Activated CD4-positive, alpha-beta memory T cell treated with anti-CD3 and anti-CD28 coated beads for 36 hours (primary cell): ENCODE measurements at regions of chr10 and their contacts with region 1.

Region 1: GRCh38 chr10:46030091-46030937 is at the start of gene NCOA4:
- DNase-seq: peak; percentile 98
- H3K4me3 Mint-ChIP-seq: peak within 1 kb of the TSS; percentile 84
- H3K27ac Mint-ChIP-seq: peak within 1 kb of the TSS; percentile 86
- H3K4me1 Mint-ChIP-seq: peaks cover 48% of the 10 kb centered on the region
- H3K27me3 Mint-ChIP-seq: no peaks in the 10 kb centered on the region
- total RNA-seq, gene NCOA4: 79.9 to 85.3 TPM

Region 2: GRCh38 chr10:45249978-45250693 is 780.2 kb before region 1 on chr10:
- CTCF ChIA-PET with region 1: no interaction called
- POLR2A ChIA-PET with region 1: no interaction called
- intact Hi-C with region 1: loop called (anchors 5 kb)
- DNase-seq: no peak
- H3K4me3 Mint-ChIP-seq: peak overlapping the region; percentile 35
- H3K27ac Mint-ChIP-seq: no peak overlapping the region
- H3K4me1 Mint-ChIP-seq: peaks cover 11% of the 10 kb centered on the region
- H3K27me3 Mint-ChIP-seq: peaks cover 2% of the 10 kb centered on the region

Region 3: GRCh38 chr10:45672181-45673073 is 357.9 kb before region 1 on chr10 and contains the start of gene ZFAND4:
- CTCF ChIA-PET with region 1: no interaction called
- POLR2A ChIA-PET with region 1: no interaction called
- intact Hi-C with region 1: loop called (anchors 5 kb)
- DNase-seq: peak; percentile 96
- H3K4me3 Mint-ChIP-seq: peak within 1 kb of the TSS; percentile 88
- H3K27ac Mint-ChIP-seq: peak within 1 kb of the TSS; percentile 62
- H3K4me1 Mint-ChIP-seq: peaks cover 35% of the 10 kb centered on the region
- H3K27me3 Mint-ChIP-seq: no peaks in the 10 kb centered on the region
- total RNA-seq, gene ZFAND4: 9.6 to 11.9 TPM

Region 4: DNA sequence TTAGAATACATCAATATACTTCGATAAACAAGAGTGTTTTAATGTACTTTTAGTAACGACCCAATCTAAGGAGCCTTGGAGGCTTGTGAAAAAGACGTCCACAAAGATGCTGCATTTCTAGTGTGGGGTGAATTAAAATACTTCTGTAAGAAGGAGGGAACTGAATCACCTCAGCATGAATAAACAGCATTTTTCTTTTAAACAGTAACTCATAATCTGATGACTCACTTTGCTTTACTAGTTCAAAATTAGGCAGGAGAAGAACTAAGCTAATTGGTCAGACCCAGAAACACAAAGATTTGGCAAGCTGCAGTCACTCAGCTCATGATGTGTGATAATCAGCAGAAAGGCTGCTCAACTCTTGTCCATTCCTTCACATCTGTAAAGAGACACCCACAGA is 24.1 kb before region 1 on chr10:
- CTCF ChIA-PET with region 1: interaction called, 16 read pairs
- POLR2A ChIA-PET with region 1: no interaction called
- intact Hi-C with region 1: no loop called
- DNase-seq: no peak
- H3K4me3 Mint-ChIP-seq: no peak overlapping the region
- H3K27ac Mint-ChIP-seq: peak overlapping the region; percentile 29
- H3K4me1 Mint-ChIP-seq: no peaks in the 10 kb centered on the region
- H3K27me3 Mint-ChIP-seq: no peaks in the 10 kb centered on the region

Region 5: GRCh38 chr10:46062723-46063428 is 32.6 kb after region 1 on chr10:
- CTCF ChIA-PET with region 1: no interaction called
- POLR2A ChIA-PET with region 1: no interaction called
- intact Hi-C with region 1: no loop called
- DNase-seq: no peak
- H3K4me3 Mint-ChIP-seq: no peak overlapping the region
- H3K27ac Mint-ChIP-seq: no peak overlapping the region
- H3K4me1 Mint-ChIP-seq: no peaks in the 10 kb centered on the region
- H3K27me3 Mint-ChIP-seq: no peaks in the 10 kb centered on the region

Region 6: DNA sequence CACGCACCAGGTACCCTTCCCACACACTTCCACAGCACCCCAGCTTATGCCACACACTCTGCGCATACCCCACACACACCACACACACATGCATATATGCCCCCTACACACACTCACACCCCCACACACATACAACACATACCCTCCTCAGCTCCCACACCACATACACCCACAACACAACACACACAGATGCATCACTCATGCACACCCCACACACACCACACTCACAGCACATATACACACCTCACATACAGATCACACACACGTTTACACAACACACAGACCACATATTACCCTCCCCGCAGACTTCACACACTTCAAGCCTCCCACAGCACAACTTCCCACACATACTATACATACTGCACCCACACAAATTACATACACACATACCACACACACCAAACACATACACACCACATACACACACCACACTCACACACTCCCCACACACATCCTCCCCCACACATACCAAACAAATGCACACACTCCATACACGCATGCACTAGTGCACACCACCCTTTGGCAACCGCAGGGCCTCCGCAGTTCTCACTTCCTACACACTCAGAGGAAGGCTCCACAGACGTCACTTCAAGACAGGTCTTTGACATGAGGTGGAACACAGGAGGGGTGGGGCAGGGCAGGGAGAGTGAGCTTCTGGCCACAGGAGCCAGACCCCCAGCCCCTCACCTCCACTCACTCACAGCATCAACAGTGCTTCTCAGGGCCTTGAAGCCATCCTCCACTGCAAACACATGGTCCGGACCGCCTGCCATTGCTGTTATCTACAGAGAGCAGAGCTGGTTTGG is 238.0 kb after region 1 on chr10:
- CTCF ChIA-PET with region 1: no interaction called
- POLR2A ChIA-PET with region 1: no interaction called
- intact Hi-C with region 1: loop called (anchors 5 kb)
- DNase-seq: peak; percentile 83
- H3K4me3 Mint-ChIP-seq: no peak overlapping the region
- H3K27ac Mint-ChIP-seq: no peak overlapping the region
- H3K4me1 Mint-ChIP-seq: peaks cover 50% of the 10 kb centered on the region
- H3K27me3 Mint-ChIP-seq: no peaks in the 10 kb centered on the region